ENCODE measurements at regions of chr1 and their contacts with region 1.

Region 1: GRCh38 chr1:90133133-90133532 is 138.2 kb downstream of the ZNF326 start:
- DNase-seq: no peak
- CTCF ChIP-seq: no peak

Region 2: GRCh38 chr1:91165033-91165654 is 1032.0 kb after region 1 on chr1:
- in situ Hi-C with region 1: loop called (anchors 25 kb)
- DNase-seq: peak; percentile 79
- CTCF ChIP-seq: peak; percentile 97

Measured in GM13976 (cell line).